CD4-positive, alpha-beta T cell (primary cell): ENCODE measurements at regions of chr3 and their contacts with region 1.

Region 1: GRCh38 chr3:38346587-38347410 is at the start of gene XYLB:
- DNase-seq: peak; percentile 42 to 87 (median 66)
- ATAC-seq: peak; percentile 95
- H3K4me3 ChIP-seq: peak within 1 kb of the TSS; percentile 53
- H3K4me3 Mint-ChIP-seq: peak within 1 kb of the TSS; percentile 91
- H3K27ac ChIP-seq: no peak within 1 kb of the TSS
- H3K27ac Mint-ChIP-seq: no peak within 1 kb of the TSS
- H3K4me1 ChIP-seq: peaks cover 16% of the 10 kb centered on the region
- H3K4me1 Mint-ChIP-seq: peaks cover 7% of the 10 kb centered on the region
- H3K27me3 ChIP-seq: no peaks in the 10 kb centered on the region
- H3K27me3 Mint-ChIP-seq: no peaks in the 10 kb centered on the region
- CTCF ChIP-seq: peak; percentile 80
- total RNA-seq, gene XYLB: 0.25 to 0.59 TPM

Region 2: DNA sequence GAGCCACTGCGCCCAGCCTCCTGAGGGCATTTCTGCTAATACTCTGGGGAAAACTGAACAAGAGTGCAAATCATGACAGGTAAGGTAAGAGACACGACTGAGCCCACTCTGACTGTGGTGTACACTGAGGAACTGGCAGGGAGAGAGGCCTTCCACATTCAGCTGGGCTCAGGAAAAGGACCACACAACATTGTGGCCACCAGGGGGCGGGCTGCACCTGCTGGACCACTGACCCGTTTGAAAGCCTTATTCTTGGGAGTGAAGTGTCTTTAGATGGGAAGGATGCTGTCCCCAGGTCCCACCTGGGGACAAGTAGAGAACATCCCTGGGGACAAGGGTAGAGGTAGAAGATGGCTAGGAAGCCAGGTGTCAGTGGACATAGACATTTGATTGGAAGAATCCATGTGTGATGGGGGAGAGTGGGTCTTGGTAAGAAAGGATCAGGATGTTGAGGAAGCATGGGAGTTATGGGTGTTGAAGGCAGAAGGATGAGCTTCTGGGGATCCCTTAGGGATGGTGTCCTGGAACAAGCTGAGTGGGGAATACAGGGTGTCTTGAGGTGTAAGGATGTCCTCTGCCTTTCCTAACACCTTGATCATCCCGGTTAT is 491.3 kb before region 1 on chr3:
- CTCF ChIA-PET with region 1: no interaction called
- POLR2A ChIA-PET with region 1: no interaction called
- intact Hi-C with region 1: loop called in 1 of 2 experiments (anchors 10 kb)
- DNase-seq: peak; percentile 50 to 85 (median 70)
- ATAC-seq: peak; percentile 47
- H3K4me3 ChIP-seq: no peak overlapping the region
- H3K4me3 Mint-ChIP-seq: peak overlapping the region; percentile 7
- H3K27ac ChIP-seq: no peak overlapping the region
- H3K27ac Mint-ChIP-seq: no peak overlapping the region
- H3K4me1 ChIP-seq: peaks cover 8% of the 10 kb centered on the region
- H3K4me1 Mint-ChIP-seq: peaks cover 8% of the 10 kb centered on the region
- H3K27me3 ChIP-seq: no peaks in the 10 kb centered on the region
- H3K27me3 Mint-ChIP-seq: no peaks in the 10 kb centered on the region
- CTCF ChIP-seq: peak; percentile 89

Region 3: DNA sequence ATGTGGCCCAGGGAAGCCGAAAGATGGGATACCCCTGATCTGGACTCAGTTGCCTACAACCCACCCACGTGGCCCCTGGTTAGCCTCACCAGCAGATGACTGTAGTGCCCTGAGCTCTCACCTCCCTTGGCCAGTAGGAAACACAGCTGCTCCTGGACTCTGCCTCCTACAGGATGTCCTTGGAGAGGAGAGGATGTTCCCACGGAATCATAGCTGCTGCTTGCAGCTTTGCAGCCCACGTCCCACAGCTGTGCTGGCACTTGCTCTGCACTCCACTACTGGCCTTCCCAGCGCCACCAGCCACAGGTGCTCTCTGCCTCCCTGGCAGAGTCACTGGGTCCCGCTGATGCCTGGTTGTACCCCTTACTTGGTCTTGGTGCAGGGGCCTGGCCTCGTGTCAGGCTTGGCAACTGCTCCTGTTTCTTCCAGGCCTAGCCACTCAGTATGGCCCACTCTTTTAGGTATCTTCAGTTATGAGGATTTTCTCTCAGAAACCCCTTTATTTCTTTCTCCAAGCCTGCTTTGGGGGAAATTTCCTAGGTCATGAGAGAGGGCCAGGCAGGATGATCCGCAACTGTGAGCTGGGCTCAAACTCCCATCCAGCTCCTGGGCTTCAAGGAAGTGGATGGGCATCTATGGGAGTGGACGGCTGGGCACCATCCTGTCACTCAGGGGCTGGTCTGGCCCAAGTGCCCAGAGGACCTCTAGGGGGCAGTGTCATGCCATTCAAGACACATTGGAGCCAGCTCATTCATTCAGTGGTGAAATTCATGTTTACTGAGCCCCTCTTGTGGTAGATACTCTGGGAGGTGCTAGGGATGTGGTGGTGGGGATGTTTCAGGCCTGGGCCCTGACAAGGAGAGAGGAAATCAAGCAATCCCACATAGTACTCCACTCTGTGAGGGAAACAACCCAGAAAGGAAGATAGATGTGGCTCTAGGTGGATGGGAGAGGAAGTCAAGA is 372.4 kb before region 1 on chr3:
- CTCF ChIA-PET with region 1: no interaction called
- POLR2A ChIA-PET with region 1: no interaction called
- intact Hi-C with region 1: loop called in 1 of 2 experiments (anchors 10 kb)
- DNase-seq: peak; percentile 49 to 85 (median 62)
- ATAC-seq: peak; percentile 97
- H3K4me3 ChIP-seq: no peak overlapping the region
- H3K4me3 Mint-ChIP-seq: no peak overlapping the region
- H3K27ac ChIP-seq: no peak overlapping the region
- H3K27ac Mint-ChIP-seq: no peak overlapping the region
- H3K4me1 ChIP-seq: peaks cover 5% of the 10 kb centered on the region
- H3K4me1 Mint-ChIP-seq: peaks cover 4% of the 10 kb centered on the region
- H3K27me3 ChIP-seq: no peaks in the 10 kb centered on the region
- H3K27me3 Mint-ChIP-seq: no peaks in the 10 kb centered on the region
- CTCF ChIP-seq: peak; percentile 85

Region 4: DNA sequence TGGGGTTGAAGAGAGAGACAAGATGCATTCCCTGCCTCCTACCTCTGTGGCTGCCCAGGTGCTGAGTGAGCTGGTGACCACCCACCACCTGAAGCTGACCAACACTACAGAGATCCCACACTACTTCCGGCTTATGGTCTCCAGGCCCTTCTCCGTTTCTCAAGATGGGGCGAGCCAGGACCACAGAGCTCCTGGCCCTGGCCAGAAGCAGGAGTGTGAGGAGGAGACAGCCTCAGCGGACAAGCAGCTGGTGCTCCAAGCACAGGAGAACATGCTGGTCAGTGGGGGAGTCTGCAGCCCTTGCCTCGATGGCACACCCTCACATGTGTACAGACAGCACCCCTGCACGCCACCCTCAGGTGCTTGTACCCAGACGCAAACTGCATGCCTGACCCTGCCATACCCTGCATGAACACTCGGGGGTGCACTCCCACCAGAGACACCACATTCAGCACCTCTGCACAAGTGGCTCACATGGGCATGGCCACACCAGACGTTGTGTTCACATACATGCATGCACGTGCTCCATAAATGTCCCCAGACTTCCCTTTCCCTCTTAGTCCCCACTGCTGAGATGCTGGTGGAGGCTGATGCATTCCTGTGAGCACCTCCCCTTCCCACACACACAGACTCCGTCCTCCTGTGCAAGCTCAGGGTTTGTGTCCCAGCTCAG is 228.9 kb before region 1 on chr3:
- CTCF ChIA-PET with region 1: interaction called, 5 read pairs
- POLR2A ChIA-PET with region 1: no interaction called
- intact Hi-C with region 1: loop called (anchors 2 to 5 kb)
- DNase-seq: peak; percentile 52 to 83 (median 72)
- ATAC-seq: peak; percentile 99
- H3K4me3 ChIP-seq: no peak overlapping the region
- H3K4me3 Mint-ChIP-seq: no peak overlapping the region
- H3K27ac ChIP-seq: no peak overlapping the region
- H3K27ac Mint-ChIP-seq: peak overlapping the region; percentile 8
- H3K4me1 ChIP-seq: peaks cover 6% of the 10 kb centered on the region
- H3K4me1 Mint-ChIP-seq: peaks cover 11% of the 10 kb centered on the region
- H3K27me3 ChIP-seq: no peaks in the 10 kb centered on the region
- H3K27me3 Mint-ChIP-seq: no peaks in the 10 kb centered on the region
- CTCF ChIP-seq: peak; percentile 82

Region 5: GRCh38 chr3:38479431-38480092 is 132.8 kb after region 1 on chr3:
- CTCF ChIA-PET with region 1: interaction called, 27 read pairs
- POLR2A ChIA-PET with region 1: interaction called, 8 read pairs
- intact Hi-C with region 1: loop called (anchors 1 kb)
- DNase-seq: peak in 13 of 14 experiments; percentile 17 to 76 (median 38)
- ATAC-seq: peak; percentile 64
- H3K4me3 ChIP-seq: no peak overlapping the region
- H3K4me3 Mint-ChIP-seq: no peak overlapping the region
- H3K27ac ChIP-seq: no peak overlapping the region
- H3K27ac Mint-ChIP-seq: no peak overlapping the region
- H3K4me1 ChIP-seq: peaks cover 3% of the 10 kb centered on the region
- H3K4me1 Mint-ChIP-seq: peaks cover 9% of the 10 kb centered on the region
- H3K27me3 ChIP-seq: no peaks in the 10 kb centered on the region
- H3K27me3 Mint-ChIP-seq: no peaks in the 10 kb centered on the region
- CTCF ChIP-seq: peak; percentile 94

Region 6: DNA sequence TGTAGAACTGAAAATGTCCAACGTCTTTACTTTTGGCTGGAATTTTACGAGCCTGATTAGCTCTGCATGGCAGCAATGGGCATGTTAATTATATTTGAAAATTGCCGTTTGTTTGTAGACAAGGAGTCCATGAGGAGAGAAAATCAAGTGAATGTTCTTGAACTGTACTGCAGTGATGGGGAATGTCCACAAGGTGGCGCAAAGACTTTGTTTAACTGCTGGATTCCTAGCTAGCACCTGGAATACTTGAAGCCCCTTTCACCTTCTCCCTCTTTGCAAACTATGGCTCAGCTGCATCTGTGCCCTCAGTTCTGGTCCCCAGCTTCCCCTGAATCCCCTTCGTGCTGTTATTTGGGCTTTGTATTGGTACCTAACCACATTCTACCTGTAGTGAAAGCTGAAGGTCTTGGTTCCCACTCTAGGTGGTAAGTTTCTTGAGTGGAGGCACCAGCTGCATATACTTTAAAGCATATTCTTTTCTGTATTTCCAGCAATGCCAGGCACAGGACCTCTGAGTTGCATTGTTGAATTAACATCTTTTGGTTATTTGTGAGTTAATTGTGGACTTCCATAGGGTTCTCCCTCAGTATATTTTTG is 174.7 kb after region 1 on chr3:
- CTCF ChIA-PET with region 1: interaction called, 11 read pairs
- POLR2A ChIA-PET with region 1: no interaction called
- intact Hi-C with region 1: no loop called
- DNase-seq: peak; percentile 41 to 82 (median 54)
- ATAC-seq: peak; percentile 69
- H3K4me3 ChIP-seq: no peak overlapping the region
- H3K4me3 Mint-ChIP-seq: no peak overlapping the region
- H3K27ac ChIP-seq: no peak overlapping the region
- H3K27ac Mint-ChIP-seq: peak overlapping the region; percentile 57
- H3K4me1 ChIP-seq: peaks cover 16% of the 10 kb centered on the region
- H3K4me1 Mint-ChIP-seq: peaks cover 40% of the 10 kb centered on the region
- H3K27me3 ChIP-seq: no peaks in the 10 kb centered on the region
- H3K27me3 Mint-ChIP-seq: no peaks in the 10 kb centered on the region
- CTCF ChIP-seq: peak; percentile 93